Panc1 (cell line): ENCODE measurements at regions of chr10 and their contacts with region 1.

Region 1: DNA sequence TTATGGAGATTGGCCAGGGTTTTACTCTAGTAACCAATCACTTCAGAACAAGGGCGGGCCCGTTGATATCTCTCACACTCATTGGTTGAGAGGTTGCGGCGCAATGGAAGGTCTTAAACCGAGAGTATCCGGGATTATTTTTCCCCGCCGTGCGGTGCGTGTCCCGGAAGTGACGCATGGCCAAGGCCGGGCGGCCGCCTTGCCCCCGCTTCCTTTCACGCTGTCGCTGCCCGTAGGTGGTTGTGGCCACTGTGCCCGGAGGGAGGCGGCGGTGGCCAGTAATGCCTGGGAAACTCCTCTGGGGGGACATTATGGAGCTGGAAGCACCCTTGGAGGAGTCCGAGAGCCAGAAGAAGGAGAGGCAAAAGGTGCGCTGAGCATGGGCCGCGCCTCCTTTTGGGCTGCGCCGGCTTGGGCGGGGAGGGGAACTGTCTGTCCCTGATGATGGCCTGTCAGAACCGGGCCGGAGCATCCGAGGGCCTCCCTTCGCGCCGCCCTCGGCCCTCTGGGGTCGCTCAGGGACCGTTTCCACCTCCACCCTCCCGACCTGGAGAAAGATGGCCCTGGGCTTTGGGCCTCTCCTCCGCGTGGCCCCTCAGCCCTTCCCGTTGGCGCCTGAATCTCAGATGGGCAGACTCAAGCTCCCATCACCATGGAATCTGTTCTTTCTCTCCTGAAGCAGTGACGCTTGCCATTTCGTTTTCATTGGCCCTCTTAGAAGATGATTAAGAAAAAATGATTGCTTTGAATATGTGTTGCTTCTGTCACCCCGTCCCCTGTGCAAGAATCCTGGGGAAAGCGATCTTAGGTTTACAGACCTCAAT is at the start of gene DDX50:
- DNase-seq: peak; percentile 99
- ATAC-seq: peak; percentile 98
- H3K4me3 ChIP-seq: peak within 1 kb of the TSS; percentile 86 to 97
- H3K27ac ChIP-seq: peak within 1 kb of the TSS; percentile 98
- H3K4me1 ChIP-seq: peaks cover 16% of the 10 kb centered on the region
- H3K27me3 ChIP-seq: no peaks in the 10 kb centered on the region
- CTCF ChIP-seq: no peak
- total RNA-seq, gene DDX50: 46.9 TPM

Region 2: GRCh38 chr10:68331455-68332258 is 569.7 kb before region 1 on chr10 and contains the start of gene HNRNPH3:
- CTCF ChIA-PET with region 1: no interaction called
- POLR2A ChIA-PET with region 1: no interaction called
- in situ Hi-C with region 1: no loop called
- intact Hi-C with region 1: no loop called
- DNase-seq: peak; percentile 89
- ATAC-seq: peak; percentile 85
- H3K4me3 ChIP-seq: peak within 1 kb of the TSS; percentile 65 to 90
- H3K27ac ChIP-seq: peak within 1 kb of the TSS; percentile 100
- H3K4me1 ChIP-seq: peaks cover 51% of the 10 kb centered on the region
- H3K27me3 ChIP-seq: no peaks in the 10 kb centered on the region
- CTCF ChIP-seq: no peak
- total RNA-seq, gene HNRNPH3: 143 TPM

Region 3: DNA sequence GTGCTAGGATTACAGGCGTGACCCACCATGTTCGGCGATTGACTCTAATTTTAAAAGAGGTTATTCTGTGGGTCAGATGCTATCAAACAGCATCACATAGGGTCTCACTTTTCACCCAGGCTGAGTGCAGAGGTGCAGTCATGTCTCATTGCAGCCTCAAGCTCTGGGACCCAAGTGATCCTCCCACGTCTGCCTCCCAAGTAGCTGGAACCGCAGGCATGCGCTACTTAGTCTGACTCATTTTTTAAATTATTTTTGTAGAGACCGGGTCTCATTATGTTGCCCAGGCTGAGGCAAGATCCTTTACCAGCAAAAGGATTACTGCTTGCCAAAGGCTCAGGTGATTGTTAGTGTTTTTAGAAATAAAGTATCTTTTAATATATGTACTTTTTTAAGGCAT is 116.8 kb before region 1 on chr10:
- CTCF ChIA-PET with region 1: interaction called, 3 read pairs
- POLR2A ChIA-PET with region 1: interaction called, 16 read pairs
- in situ Hi-C with region 1: no loop called
- intact Hi-C with region 1: no loop called
- DNase-seq: no peak
- ATAC-seq: 0 out of 2 replicates have a peak, but pooled peaks have one; percentile 45
- H3K4me3 ChIP-seq: no peak overlapping the region
- H3K27ac ChIP-seq: no peak overlapping the region
- H3K4me1 ChIP-seq: no peaks in the 10 kb centered on the region
- H3K27me3 ChIP-seq: no peaks in the 10 kb centered on the region
- CTCF ChIP-seq: no peak

Region 4: DNA sequence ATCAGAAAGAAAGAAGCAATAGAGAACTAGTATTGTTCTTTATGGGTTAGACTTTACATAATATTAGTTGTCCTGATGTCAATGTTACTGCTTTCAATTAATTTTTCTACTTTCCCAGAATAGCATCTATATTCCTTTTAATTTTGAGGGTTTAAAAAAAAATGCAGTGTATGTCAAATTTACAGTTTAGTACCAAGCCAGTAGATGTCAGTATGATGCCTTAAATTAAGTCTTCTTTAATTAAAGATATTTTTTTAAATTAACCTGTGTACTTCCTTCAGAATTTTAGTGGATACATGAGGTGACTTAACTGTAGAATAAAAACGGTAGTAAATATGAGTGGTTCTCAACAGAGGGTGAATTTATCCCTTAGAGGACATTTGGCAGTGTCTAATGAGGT is 109.2 kb before region 1 on chr10:
- CTCF ChIA-PET with region 1: no interaction called
- POLR2A ChIA-PET with region 1: no interaction called
- in situ Hi-C with region 1: no loop called
- intact Hi-C with region 1: loop called (anchors 5 kb)
- DNase-seq: no peak
- ATAC-seq: no peak
- H3K4me3 ChIP-seq: no peak overlapping the region
- H3K27ac ChIP-seq: no peak overlapping the region
- H3K4me1 ChIP-seq: no peaks in the 10 kb centered on the region
- H3K27me3 ChIP-seq: no peaks in the 10 kb centered on the region
- CTCF ChIP-seq: no peak

Region 5: DNA sequence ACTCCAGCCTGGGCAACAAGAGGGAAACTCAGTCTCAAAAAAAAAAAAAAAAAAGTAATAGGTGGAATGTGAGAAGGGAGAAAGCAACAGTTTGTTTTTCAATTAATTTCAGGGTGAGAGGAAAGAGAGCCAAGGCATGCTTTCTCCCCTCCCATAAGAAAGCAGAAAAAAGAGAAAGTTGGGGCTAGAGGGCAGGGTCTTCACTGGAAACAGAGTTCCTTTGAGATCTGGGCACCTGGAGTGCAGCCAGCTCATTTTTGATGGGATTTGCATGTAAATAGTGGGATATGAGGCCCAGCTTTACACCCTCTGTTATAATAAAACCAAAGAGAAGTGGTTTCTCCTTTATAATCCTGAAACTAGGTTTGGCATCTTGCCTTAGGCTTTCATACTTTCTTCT is 87.8 kb before region 1 on chr10:
- CTCF ChIA-PET with region 1: interaction called, 11 read pairs
- POLR2A ChIA-PET with region 1: no interaction called
- in situ Hi-C with region 1: no loop called
- intact Hi-C with region 1: no loop called
- DNase-seq: no peak
- ATAC-seq: no peak
- H3K4me3 ChIP-seq: no peak overlapping the region
- H3K27ac ChIP-seq: no peak overlapping the region
- H3K4me1 ChIP-seq: no peaks in the 10 kb centered on the region
- H3K27me3 ChIP-seq: no peaks in the 10 kb centered on the region
- CTCF ChIP-seq: no peak